Activated CD4-positive, alpha-beta T cell treated with anti-CD3 and anti-CD28 coated beads for 36 hours (primary cell): ENCODE measurements at regions of chr19 and their contacts with region 1.

Region 1: GRCh38 chr19:45817010-45817724 is 2.1 kb upstream of the RSPH6A start:
- DNase-seq: peak; percentile 99
- ATAC-seq: peak; percentile 100
- H3K4me3 Mint-ChIP-seq: no peak overlapping the region
- H3K27ac Mint-ChIP-seq: no peak overlapping the region
- H3K4me1 Mint-ChIP-seq: peaks cover 7% of the 10 kb centered on the region
- H3K27me3 Mint-ChIP-seq: peaks cover 10% of the 10 kb centered on the region

Region 2: DNA sequence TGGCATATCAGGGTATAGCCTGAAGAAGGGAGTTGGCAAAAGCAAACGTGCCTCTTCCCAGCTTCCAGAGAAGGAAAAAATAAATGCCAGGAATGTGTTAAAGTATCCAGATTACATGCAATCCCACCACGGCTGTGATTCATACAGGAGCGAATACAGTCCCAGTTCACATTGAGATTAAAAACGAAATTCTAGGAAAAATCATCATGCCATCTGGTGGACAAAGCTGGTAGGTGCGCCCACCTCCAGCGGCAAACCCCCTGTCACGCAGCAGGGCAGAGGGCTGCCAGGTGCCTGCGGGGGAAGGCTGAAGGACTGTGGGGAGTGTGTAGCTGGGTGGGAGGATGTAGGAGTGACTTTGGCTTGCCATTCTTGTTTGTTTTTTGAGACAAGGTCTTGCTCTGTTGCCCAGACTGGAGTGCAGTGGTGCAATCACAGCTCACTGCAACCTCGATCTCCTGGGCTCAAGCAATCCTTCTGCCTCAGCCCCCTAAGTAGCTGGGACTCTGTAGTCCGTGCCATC is 18.1 kb before region 1 on chr19:
- CTCF ChIA-PET with region 1: interaction called, 15 read pairs
- POLR2A ChIA-PET with region 1: no interaction called
- intact Hi-C with region 1: no loop called
- DNase-seq: peak; percentile 76
- ATAC-seq: peak; percentile 92
- H3K4me3 Mint-ChIP-seq: no peak overlapping the region
- H3K27ac Mint-ChIP-seq: no peak overlapping the region
- H3K4me1 Mint-ChIP-seq: peaks cover 5% of the 10 kb centered on the region
- H3K27me3 Mint-ChIP-seq: peaks cover 26% of the 10 kb centered on the region

Region 3: GRCh38 chr19:46009530-46010510 is 192.7 kb after region 1 on chr19:
- CTCF ChIA-PET with region 1: no interaction called
- POLR2A ChIA-PET with region 1: no interaction called
- intact Hi-C with region 1: loop called (anchors 2 to 10 kb)
- DNase-seq: peak; percentile 80
- ATAC-seq: peak; percentile 88
- H3K4me3 Mint-ChIP-seq: no peak overlapping the region
- H3K27ac Mint-ChIP-seq: no peak overlapping the region
- H3K4me1 Mint-ChIP-seq: peaks cover 5% of the 10 kb centered on the region
- H3K27me3 Mint-ChIP-seq: peaks cover 6% of the 10 kb centered on the region

Region 4: GRCh38 chr19:46076951-46077816 is 260.0 kb after region 1 on chr19:
- CTCF ChIA-PET with region 1: no interaction called
- POLR2A ChIA-PET with region 1: no interaction called
- intact Hi-C with region 1: no loop called
- DNase-seq: peak; percentile 67
- ATAC-seq: peak; percentile 63
- H3K4me3 Mint-ChIP-seq: no peak overlapping the region
- H3K27ac Mint-ChIP-seq: no peak overlapping the region
- H3K4me1 Mint-ChIP-seq: peaks cover 8% of the 10 kb centered on the region
- H3K27me3 Mint-ChIP-seq: peaks cover 73% of the 10 kb centered on the region